Astrocyte of the cerebellum (primary cell): ENCODE measurements at regions of chr16 and their contacts with region 1.

Region 1: DNA sequence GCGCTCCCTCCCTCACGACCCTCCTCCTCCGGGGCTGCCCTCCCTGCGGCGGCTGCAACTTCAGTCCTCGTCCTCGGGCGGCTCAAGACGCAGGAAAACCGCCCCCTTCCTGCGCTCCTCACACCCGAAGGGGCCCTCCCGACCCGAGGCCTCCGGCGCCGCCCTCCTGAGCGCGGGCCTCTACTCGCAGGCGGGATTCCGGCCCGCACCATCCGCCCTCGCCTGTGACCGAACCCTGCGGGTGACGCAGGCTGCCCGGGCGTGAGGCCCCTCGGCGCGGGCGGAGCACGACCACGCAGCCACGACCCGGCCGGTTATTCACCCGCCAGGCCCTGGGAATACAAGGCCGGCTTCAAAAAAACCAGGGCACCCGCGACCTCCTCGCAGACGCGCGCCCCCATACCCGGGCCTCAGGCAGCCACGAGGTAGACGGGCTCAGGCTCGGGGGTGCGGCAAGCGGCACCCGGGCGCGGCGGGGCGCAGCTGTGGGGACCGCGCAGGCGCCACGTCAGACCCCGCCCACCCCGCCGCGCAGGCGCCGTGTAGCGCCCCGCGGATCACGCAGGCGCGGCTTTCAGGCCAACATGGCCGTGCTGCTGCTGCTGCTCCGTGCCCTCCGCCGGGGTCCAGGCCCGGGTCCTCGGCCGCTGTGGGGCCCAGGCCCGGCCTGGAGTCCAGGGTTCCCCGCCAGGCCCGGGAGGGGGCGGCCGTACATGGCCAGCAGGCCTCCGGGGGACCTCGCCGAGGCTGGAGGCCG is at the start of gene SPG7:
- DNase-seq: peak; percentile 49
- H3K4me3 ChIP-seq: peak within 1 kb of the TSS; percentile 85
- CTCF ChIP-seq: no peak

Region 2: DNA sequence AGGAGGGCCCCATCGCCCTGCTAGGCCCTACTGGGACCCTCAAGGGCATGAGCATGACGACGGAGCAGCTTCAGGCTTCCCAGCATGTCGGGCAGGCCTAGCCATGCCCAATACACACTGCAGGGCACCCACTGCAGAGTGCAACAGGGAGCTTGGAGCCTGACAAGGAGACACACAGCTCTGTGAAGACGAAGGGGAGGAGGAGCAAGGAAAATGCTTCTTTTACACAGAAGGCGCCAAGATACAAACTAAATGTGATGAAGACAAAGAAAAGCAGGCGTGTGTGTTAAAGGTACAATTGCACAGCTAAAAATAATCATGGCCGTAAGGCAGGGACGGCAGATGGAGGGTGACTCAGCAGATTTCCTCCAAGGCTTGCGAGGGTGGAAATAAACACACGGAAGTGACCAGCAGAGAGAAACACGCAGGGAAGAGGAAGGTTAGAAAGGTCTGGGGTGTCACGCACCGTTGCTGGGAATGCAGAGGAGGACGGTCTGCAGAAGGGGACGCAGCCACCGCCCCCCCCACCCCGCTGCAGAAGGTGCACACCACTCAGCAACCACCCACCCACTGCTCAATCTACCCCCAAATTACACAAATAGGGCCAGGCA is 182.0 kb before region 1 on chr16:
- in situ Hi-C with region 1: loop called (anchors 25 kb)
- DNase-seq: no peak
- H3K4me3 ChIP-seq: no peak overlapping the region
- CTCF ChIP-seq: no peak

Region 3: GRCh38 chr16:89574681-89575246 is 66.8 kb after region 1 on chr16:
- in situ Hi-C with region 1: no loop called
- DNase-seq: no peak
- H3K4me3 ChIP-seq: peak overlapping the region; percentile 27
- CTCF ChIP-seq: peak; percentile 68